H1 (cell line): ENCODE measurements at regions of chr1 and their contacts with region 1.

Region 1: GRCh38 chr1:56584910-56585528 is 5.7 kb upstream of the PLPP3 start:
- DNase-seq: no peak
- H3K4me3 ChIP-seq: no peak overlapping the region
- H3K27ac ChIP-seq: no peak overlapping the region
- H3K4me1 ChIP-seq: peaks cover 0 to 6% (median 0%) of the 10 kb centered on the region in 4 experiments; a peak in 3 of 7 replicates
- H3K27me3 ChIP-seq: no peaks in the 10 kb centered on the region
- CTCF ChIP-seq: peak in 2 of 3 experiments; percentile 72 to 79; a peak in 3 of 4 replicates
- EP300 ChIP-seq: 0 out of 3 replicates have a peak, but pooled peaks of 1 of the 2 experiments have one; percentile 19
- POLR2A ChIP-seq: no peak
- RAD21 ChIP-seq: peak; percentile 95 to 96

Region 2: GRCh38 chr1:55868026-55868425 is 717.0 kb before region 1 on chr1:
- CTCF ChIA-PET with region 1: interaction called, 13 read pairs
- POLR2A ChIA-PET with region 1: no interaction called
- DNase-seq: no peak
- H3K4me3 ChIP-seq: no peak overlapping the region
- H3K27ac ChIP-seq: no peak overlapping the region
- H3K4me1 ChIP-seq: no peaks in the 10 kb centered on the region
- H3K27me3 ChIP-seq: no peaks in the 10 kb centered on the region
- CTCF ChIP-seq: no peak; a peak in 1 of 4 replicates
- EP300 ChIP-seq: no peak
- POLR2A ChIP-seq: no peak
- RAD21 ChIP-seq: peak in 1 of 2 experiments; percentile 25; a peak in 1 of 4 replicates

Region 3: GRCh38 chr1:56409094-56409691 is 175.8 kb before region 1 on chr1:
- CTCF ChIA-PET with region 1: interaction called, 17 read pairs
- POLR2A ChIA-PET with region 1: no interaction called
- DNase-seq: peak; percentile 23 to 79
- H3K4me3 ChIP-seq: no peak overlapping the region
- H3K27ac ChIP-seq: no peak overlapping the region
- H3K4me1 ChIP-seq: peaks cover 0 to 3% (median 0%) of the 10 kb centered on the region in 4 experiments; a peak in 1 of 7 replicates
- H3K27me3 ChIP-seq: no peaks in the 10 kb centered on the region
- CTCF ChIP-seq: peak; percentile 71 to 77 (median 77)
- EP300 ChIP-seq: no peak
- POLR2A ChIP-seq: no peak
- RAD21 ChIP-seq: peak; percentile 82

Region 4: DNA sequence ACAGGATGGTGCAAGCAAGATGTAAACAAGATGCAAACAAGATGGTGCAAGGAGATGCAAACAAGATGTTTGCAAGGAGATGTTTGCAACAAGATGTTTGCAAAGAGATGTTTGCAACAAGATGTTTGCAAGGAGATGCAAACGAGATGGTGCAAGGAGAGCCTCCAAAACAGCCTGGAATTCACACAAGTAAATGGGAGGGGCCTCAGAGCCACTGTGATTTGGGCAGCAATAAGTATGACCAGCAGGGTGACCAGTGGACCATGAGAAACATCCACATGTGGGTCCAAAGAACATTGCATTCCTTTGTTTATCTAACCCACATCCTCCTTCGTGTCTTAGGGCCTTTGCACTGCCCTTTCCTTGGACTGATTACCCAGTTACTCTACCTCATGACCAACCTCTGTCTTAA is 168.5 kb before region 1 on chr1:
- CTCF ChIA-PET with region 1: interaction called, 17 read pairs
- POLR2A ChIA-PET with region 1: no interaction called
- DNase-seq: no peak
- H3K4me3 ChIP-seq: no peak overlapping the region
- H3K27ac ChIP-seq: no peak overlapping the region
- H3K4me1 ChIP-seq: peaks cover 0 to 3% (median 0%) of the 10 kb centered on the region in 4 experiments; a peak in 1 of 7 replicates
- H3K27me3 ChIP-seq: no peaks in the 10 kb centered on the region; a peak in 1 of 7 replicates
- CTCF ChIP-seq: peak in 1 of 3 experiments; percentile 33; a peak in 1 of 4 replicates
- EP300 ChIP-seq: no peak
- POLR2A ChIP-seq: no peak
- RAD21 ChIP-seq: peak; percentile 26 to 42; a peak in 1 of 4 replicates

Region 5: GRCh38 chr1:56446531-56447098 is 138.4 kb before region 1 on chr1:
- CTCF ChIA-PET with region 1: interaction called, 11 read pairs
- POLR2A ChIA-PET with region 1: no interaction called
- DNase-seq: no peak
- H3K4me3 ChIP-seq: no peak overlapping the region
- H3K27ac ChIP-seq: no peak overlapping the region
- H3K4me1 ChIP-seq: peaks cover 2 to 17% (median 7%) of the 10 kb centered on the region in 4 experiments; a peak in 6 of 7 replicates
- H3K27me3 ChIP-seq: peaks cover 0 to 2% (median under 1%) of the 10 kb centered on the region in 4 experiments; a peak in 2 of 7 replicates
- CTCF ChIP-seq: no peak
- EP300 ChIP-seq: no peak
- POLR2A ChIP-seq: no peak
- RAD21 ChIP-seq: no peak

Region 6: GRCh38 chr1:56508523-56508983 is 76.5 kb before region 1 on chr1:
- CTCF ChIA-PET with region 1: interaction called, 10 read pairs
- POLR2A ChIA-PET with region 1: interaction called, 5 read pairs
- DNase-seq: no peak
- H3K4me3 ChIP-seq: no peak overlapping the region
- H3K27ac ChIP-seq: no peak overlapping the region
- H3K4me1 ChIP-seq: peaks cover 4 to 19% (median 15%) of the 10 kb centered on the region in 4 experiments
- H3K27me3 ChIP-seq: no peaks in the 10 kb centered on the region
- CTCF ChIP-seq: no peak
- EP300 ChIP-seq: no peak
- POLR2A ChIP-seq: no peak
- RAD21 ChIP-seq: no peak

Region 7: GRCh38 chr1:56627636-56628039 is 42.6 kb after region 1 on chr1:
- CTCF ChIA-PET with region 1: no interaction called
- POLR2A ChIA-PET with region 1: no interaction called
- DNase-seq: no peak
- H3K4me3 ChIP-seq: no peak overlapping the region
- H3K27ac ChIP-seq: no peak overlapping the region
- H3K4me1 ChIP-seq: peaks cover 0 to 2% (median 0%) of the 10 kb centered on the region in 4 experiments; a peak in 1 of 7 replicates
- H3K27me3 ChIP-seq: no peaks in the 10 kb centered on the region
- CTCF ChIP-seq: no peak
- EP300 ChIP-seq: no peak
- POLR2A ChIP-seq: no peak
- RAD21 ChIP-seq: no peak

Region 8: GRCh38 chr1:56686171-56686570 is 101.2 kb after region 1 on chr1:
- CTCF ChIA-PET with region 1: no interaction called
- POLR2A ChIA-PET with region 1: no interaction called
- DNase-seq: no peak
- H3K4me3 ChIP-seq: no peak overlapping the region
- H3K27ac ChIP-seq: no peak overlapping the region
- H3K4me1 ChIP-seq: peaks cover 0 to 4% (median 2%) of the 10 kb centered on the region in 4 experiments; a peak in 3 of 7 replicates
- H3K27me3 ChIP-seq: no peaks in the 10 kb centered on the region
- CTCF ChIP-seq: no peak
- EP300 ChIP-seq: no peak
- POLR2A ChIP-seq: no peak
- RAD21 ChIP-seq: no peak